Endothelial cell of umbilical vein (primary cell): ENCODE measurements at regions of chr15 and their contacts with region 1.

Region 1: DNA sequence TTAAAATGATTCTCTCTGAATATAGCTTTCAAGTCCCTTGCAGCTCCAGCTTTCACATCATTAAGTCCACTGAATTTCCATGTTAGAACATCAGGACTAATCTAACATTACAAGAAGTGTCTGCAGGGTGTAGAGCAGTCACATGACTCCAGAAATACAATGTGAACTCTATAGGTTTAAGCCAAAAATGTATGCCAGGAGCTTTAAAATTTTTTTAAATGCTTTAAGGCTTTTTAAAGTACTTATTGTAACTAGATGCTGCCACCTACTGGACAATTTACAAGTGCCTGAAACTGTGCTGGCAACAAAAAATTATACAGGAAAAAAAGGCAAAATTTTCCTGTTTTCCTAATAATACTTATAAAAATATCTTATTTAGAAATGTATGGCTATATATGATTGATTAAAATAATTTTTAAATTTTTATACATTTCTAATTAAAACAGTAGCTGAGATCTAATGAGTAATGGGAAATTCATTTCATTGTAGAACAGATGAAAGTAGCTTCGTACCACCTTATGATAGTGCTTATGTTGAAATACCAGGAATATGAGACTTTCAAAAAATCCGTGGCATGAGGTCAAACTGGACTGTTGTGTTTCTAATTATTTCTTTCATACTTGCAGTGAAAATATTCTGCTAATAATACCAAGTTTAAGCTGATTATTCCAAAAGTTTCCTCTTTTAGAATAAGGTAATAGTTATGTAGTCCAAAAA is 25.7 kb downstream of the FSIP1 start:
- DNase-seq: peak; percentile 74
- H3K4me3 ChIP-seq: no peak overlapping the region
- H3K27ac ChIP-seq: no peak overlapping the region
- H3K4me1 ChIP-seq: no peaks in the 10 kb centered on the region
- H3K27me3 ChIP-seq: no peaks in the 10 kb centered on the region
- CTCF ChIP-seq: peak; percentile 49 to 51
- POLR2A ChIP-seq: no peak

Region 2: DNA sequence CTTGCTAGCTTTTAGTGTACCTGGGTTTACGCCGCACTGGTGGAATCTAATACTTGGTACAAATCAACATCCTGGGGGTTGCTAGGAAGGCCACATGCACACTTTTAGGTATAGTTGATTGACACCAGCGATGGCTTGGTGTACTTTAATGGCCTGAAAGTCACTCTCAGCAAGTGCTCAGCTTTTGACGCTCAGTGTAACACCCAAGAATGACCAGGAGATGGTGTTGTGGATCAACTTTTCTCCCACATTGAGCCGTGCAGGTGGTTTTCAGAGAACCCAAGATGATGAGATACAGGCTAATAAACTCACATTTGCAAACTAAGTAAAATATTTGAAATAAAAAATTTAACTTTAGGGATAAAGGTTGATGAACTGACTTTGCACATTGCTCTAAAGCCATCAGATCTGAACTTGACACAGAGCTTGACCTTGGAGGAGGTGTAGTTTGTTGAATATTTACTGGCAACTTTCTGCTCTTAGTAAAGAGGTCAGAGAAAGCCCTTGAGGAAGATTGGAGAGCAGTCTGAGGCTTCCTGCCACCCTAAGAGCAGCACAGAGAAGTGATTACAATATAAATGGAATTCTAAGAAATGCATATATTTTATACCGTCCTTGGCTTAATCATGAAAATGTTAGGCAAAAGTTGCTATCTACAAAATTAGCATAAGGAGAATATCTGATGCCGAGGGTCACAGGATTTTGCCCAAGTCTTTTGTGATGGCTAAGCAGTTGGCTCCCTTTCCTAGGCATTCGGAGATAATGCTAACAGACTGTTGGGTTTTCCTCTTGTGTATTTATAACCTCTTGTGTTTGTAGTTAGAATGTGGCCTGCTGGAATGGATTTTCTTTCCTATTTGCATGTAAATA is 1048.9 kb before region 1 on chr15:
- CTCF ChIA-PET with region 1: interaction called, 63 read pairs
- POLR2A ChIA-PET with region 1: no interaction called
- dilution Hi-C with region 1: no loop called
- intact Hi-C with region 1: loop called (anchors 5 kb)
- DNase-seq: peak; percentile 87
- H3K4me3 ChIP-seq: no peak overlapping the region
- H3K27ac ChIP-seq: no peak overlapping the region
- H3K4me1 ChIP-seq: peaks cover 10% of the 10 kb centered on the region
- H3K27me3 ChIP-seq: no peaks in the 10 kb centered on the region
- CTCF ChIP-seq: peak; percentile 71 to 78
- POLR2A ChIP-seq: no peak

Region 3: DNA sequence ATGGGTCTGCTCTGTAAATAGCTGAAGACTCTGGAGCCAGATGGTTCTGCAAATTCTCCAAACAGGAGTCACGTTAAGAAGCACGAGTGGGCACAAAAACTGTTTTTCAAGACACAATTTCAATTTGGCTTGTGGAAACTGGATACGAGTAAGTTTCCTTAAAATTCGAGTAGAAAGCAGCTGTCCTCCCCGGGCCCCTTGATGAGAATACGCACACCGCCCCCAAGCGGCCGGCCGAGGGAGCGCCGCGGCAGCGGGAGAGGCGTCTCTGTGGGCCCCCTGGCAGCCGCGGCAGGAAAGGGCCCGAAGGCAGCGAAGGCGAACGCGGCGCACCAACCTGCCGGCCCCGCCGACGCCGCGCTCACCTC is 176.9 kb before region 1 on chr15:
- CTCF ChIA-PET with region 1: interaction called, 12 read pairs
- POLR2A ChIA-PET with region 1: interaction called, 3 read pairs
- dilution Hi-C with region 1: no loop called
- intact Hi-C with region 1: no loop called
- DNase-seq: peak; percentile 93
- H3K4me3 ChIP-seq: peak overlapping the region; percentile 7 to 61 (median 55)
- H3K27ac ChIP-seq: peak overlapping the region; percentile 98
- H3K4me1 ChIP-seq: peaks cover 20% of the 10 kb centered on the region
- H3K27me3 ChIP-seq: no peaks in the 10 kb centered on the region
- CTCF ChIP-seq: peak; percentile 93 to 96
- POLR2A ChIP-seq: peak; percentile 74

Region 4: DNA sequence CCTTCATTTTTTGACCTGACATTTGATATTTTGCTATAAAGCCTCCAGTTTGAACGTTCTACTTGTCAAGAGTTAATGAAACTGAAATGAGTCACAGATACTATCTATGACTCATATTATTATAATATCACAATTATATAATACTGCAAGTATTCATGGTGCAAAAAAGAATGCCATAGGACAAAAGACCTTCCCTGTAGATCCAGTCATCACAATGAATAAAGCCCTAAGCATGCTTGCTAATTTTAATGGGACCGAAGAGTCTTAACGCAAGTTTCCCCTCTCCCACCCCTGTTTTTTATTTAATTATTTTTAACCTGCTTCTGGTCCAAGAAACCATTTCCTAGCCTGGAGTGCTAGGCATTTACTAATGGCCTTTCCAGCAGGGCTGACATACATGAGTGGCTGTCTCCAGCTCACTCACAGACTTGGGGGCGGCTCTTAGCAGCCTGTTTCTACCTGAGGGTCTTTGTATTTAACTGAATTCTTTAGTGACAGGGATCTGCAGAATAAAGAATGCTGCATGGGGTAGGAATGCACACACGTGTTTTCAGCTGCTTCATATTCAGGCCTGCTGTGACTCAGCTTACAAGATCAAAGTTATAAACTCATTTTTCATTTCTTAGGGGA is 114.8 kb before region 1 on chr15:
- CTCF ChIA-PET with region 1: interaction called, 21 read pairs
- POLR2A ChIA-PET with region 1: no interaction called
- dilution Hi-C with region 1: no loop called
- intact Hi-C with region 1: no loop called
- DNase-seq: peak; percentile 82
- H3K4me3 ChIP-seq: no peak overlapping the region
- H3K27ac ChIP-seq: peak overlapping the region; percentile 81
- H3K4me1 ChIP-seq: peaks cover 20% of the 10 kb centered on the region
- H3K27me3 ChIP-seq: no peaks in the 10 kb centered on the region
- CTCF ChIP-seq: no peak
- POLR2A ChIP-seq: no peak

Region 5: DNA sequence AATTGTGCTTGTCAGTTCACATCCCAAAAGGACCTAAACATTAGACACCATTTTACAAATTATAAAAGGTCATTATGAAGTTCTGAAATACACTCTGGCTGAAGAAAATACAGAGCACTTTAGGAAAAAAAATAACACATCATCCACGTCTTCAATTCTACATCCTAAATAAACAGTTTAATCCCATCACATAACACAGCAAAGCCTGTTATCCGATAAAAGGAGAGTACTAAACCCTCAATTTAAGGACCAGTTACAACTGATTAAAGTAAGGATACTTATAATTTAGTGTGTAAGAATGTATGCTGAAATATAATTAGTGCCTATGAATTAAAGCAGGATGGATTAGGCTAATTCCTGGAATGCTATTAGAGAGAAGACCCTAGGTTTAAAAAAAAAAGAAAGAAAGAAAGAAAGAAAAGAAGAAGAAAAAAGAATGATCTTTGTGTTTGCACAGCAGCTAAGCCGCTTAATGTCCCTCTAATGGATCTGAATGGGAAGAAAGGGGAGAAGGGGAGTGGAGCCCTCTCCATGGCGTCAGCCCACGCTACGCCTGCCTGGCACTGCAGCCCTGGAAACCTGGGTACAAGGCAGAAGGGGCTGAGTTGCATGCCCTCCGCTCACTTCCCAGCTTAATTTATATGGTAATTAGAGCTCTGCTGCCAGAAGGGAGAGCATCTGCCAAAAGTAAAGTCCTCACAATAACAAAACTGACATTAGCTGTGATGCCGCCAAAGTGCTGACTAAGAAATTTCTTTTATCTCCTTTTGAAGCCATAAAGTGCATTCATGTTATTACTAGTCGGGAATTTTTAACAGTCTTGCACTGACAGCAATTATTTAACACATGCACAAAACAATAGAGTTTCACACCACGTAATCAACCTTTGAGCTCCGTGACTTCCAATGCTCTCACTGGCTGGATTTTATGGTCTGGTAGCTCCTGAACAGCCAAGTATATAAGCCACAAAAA is 64.3 kb before region 1 on chr15:
- CTCF ChIA-PET with region 1: interaction called, 240 read pairs
- POLR2A ChIA-PET with region 1: no interaction called
- dilution Hi-C with region 1: no loop called
- intact Hi-C with region 1: no loop called
- DNase-seq: no peak
- H3K4me3 ChIP-seq: no peak overlapping the region
- H3K27ac ChIP-seq: no peak overlapping the region
- H3K4me1 ChIP-seq: no peaks in the 10 kb centered on the region
- H3K27me3 ChIP-seq: no peaks in the 10 kb centered on the region
- CTCF ChIP-seq: no peak
- POLR2A ChIP-seq: no peak

Region 6: GRCh38 chr15:39736412-39737197 is 20.4 kb before region 1 on chr15:
- CTCF ChIA-PET with region 1: interaction called, 45 read pairs
- POLR2A ChIA-PET with region 1: no interaction called
- dilution Hi-C with region 1: no loop called
- intact Hi-C with region 1: no loop called
- DNase-seq: no peak
- H3K4me3 ChIP-seq: no peak overlapping the region
- H3K27ac ChIP-seq: no peak overlapping the region
- H3K4me1 ChIP-seq: no peaks in the 10 kb centered on the region
- H3K27me3 ChIP-seq: no peaks in the 10 kb centered on the region
- CTCF ChIP-seq: no peak
- POLR2A ChIP-seq: no peak